GM18951 (cell line): ENCODE measurements at regions of chr14 and their contacts with region 1.

Region 1: GRCh38 chr14:105267820-105268548 is 19.7 kb downstream of the BTBD6 start:
- POLR2A ChIP-seq: no peak

Region 2: DNA sequence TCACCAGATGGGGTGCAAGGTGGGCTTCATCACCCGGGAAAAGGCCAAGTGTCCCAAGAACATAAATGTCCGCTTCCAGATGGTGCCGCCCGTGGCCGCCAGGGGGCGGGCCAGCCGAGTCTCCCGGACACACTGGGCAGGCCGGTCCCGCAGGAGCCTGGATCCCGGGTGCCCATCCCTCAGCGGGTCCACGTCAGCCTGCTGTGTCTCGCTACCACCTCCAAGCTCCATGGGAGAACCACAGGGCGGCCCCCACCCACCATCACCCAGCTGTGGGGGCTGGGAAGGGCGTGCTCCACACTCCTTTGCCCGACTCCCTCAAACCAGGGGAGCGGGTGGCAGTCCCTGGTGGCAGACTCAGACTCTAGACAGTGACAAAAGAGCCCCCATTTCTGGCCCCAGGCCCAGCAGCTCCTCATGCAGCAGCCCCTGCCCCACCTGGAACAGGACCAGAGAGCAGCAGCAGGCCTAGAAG is 64.9 kb before region 1 on chr14:
- in situ Hi-C with region 1: loop called (anchors 10 kb)
- POLR2A ChIP-seq: no peak

Region 3: GRCh38 chr14:105314287-105315200 is 46.6 kb after region 1 on chr14 and contains the start of gene PACS2:
- in situ Hi-C with region 1: no loop called
- POLR2A ChIP-seq: peak; percentile 50